Endothelial cell of umbilical vein (primary cell): ENCODE measurements at regions of chr2 and their contacts with region 1.

Region 1: DNA sequence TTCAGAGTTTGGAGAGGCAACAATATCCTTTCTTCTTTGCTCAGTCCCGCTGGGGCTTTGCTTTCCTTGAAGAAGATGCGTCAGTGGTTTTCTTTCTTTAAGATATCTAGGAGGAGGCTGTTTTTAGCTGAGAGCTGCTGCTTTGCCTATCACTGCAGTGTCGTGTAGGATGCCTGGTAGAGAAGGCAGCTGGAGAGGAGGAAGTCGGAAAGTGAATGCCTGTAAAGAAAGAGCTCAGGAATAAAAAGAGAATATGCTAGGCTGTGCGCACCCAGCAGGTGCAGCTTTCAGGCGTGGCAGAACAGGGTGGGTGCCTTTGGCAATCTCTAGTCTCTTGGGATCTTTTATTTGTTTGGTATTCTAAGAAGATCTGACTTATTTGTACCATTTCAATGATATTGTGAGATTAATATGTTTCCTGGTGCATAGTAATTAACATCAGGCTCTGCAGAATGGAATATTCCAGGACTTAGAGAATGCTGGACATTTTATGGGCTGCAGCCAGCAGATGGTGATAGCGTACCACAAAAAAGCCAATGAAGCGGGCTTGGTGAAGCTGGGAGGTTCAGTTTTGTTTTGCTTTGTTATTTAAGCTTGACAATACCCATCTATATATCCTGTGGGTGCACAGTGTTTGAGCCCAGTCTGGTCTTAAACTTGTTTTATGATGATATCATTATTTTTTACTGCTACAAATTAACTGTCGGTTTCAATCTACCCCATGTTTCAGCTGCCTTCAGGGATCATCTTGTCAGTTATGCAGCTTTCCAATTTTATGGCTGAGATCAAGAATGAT is 34.9 kb downstream of the CAVIN2 start:
- DNase-seq: peak; percentile 86
- H3K4me3 ChIP-seq: no peak overlapping the region
- H3K27ac ChIP-seq: no peak overlapping the region
- H3K4me1 ChIP-seq: peaks cover 2% of the 10 kb centered on the region
- H3K27me3 ChIP-seq: no peaks in the 10 kb centered on the region
- CTCF ChIP-seq: peak; percentile 67 to 68
- POLR2A ChIP-seq: no peak

Region 2: DNA sequence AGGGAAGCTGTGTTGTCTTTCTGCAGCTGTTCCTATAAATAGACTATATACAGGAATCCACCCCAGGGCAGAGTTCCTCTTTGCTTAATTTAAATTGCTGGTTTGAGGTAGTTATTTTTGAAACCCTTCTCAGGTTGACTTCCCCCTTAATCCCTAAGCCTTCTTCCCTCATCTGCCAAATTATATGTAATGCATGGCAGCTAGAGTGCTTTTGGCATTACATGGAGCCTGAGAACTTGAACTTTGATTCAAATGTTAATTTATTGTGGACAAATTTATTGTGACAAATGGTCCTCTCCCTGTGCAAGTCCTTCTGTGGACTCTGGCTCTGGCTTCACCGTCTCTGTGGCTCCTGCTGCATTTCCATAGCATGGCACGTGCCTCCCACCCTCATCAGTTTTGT is 537.6 kb before region 1 on chr2:
- CTCF ChIA-PET with region 1: no interaction called
- POLR2A ChIA-PET with region 1: no interaction called
- dilution Hi-C with region 1: no loop called
- intact Hi-C with region 1: no loop called
- DNase-seq: no peak
- H3K4me3 ChIP-seq: no peak overlapping the region
- H3K27ac ChIP-seq: no peak overlapping the region
- H3K4me1 ChIP-seq: no peaks in the 10 kb centered on the region
- H3K27me3 ChIP-seq: no peaks in the 10 kb centered on the region
- CTCF ChIP-seq: no peak
- POLR2A ChIP-seq: no peak

Region 3: DNA sequence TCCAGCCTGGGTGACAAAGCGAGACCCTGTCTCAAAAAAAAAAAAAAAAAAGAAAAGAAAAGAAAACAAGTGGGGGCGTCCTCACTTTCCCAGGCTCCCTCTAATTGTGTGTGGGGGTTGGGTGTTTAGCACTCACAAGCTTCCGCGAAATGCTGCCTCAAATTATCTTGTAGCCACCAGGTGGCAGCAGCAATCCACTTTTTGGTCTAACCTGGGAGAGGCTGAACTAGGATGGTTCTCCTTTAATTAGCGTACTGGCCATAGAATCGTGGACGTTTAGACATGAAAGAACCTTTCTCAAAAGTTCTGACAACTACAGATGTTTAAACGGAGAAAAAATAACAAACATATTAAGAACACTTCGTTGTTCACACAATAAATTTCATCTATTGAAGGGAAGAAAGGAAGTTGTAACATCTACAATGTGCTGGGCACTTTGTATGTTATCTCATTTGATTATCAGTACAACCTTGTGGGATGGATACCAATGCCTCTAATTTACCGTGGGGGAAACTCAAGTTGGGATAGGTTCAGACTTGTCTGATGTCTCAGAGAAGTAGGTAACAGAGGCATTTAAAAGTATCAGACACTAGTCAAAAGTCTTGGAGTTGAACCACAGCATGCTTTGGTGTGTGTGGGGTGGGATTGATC is 256.8 kb before region 1 on chr2:
- CTCF ChIA-PET with region 1: interaction called, 22 read pairs
- POLR2A ChIA-PET with region 1: no interaction called
- dilution Hi-C with region 1: no loop called
- intact Hi-C with region 1: loop called (anchors 1 kb)
- DNase-seq: peak; percentile 80
- H3K4me3 ChIP-seq: no peak overlapping the region
- H3K27ac ChIP-seq: no peak overlapping the region
- H3K4me1 ChIP-seq: peaks cover 8% of the 10 kb centered on the region
- H3K27me3 ChIP-seq: peaks cover 3 to 7% of the 10 kb centered on the region in 2 experiments
- CTCF ChIP-seq: peak; percentile 65 to 69
- POLR2A ChIP-seq: no peak

Region 4: DNA sequence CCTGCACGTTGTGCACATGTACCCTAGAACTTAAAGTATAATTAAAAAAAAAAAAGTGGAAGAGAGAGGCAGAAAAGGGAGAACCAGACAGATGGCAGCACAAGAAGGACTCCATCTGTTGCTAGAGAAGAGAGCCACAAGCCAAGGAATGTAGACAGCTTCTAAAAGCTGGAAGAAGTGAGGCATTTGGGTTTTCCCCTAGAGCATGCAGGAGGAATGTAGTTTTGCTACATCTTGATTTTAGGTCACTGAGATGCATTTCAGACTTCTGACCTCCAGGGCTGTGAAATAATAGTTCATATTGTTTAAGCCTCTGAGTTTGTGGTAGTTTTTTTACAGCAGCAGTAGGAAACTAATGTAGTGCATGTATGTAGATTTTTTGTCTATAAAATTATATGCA is 11.1 kb before region 1 on chr2:
- CTCF ChIA-PET with region 1: interaction called, 11 read pairs
- POLR2A ChIA-PET with region 1: no interaction called
- dilution Hi-C with region 1: no loop called
- intact Hi-C with region 1: no loop called
- DNase-seq: no peak
- H3K4me3 ChIP-seq: no peak overlapping the region
- H3K27ac ChIP-seq: no peak overlapping the region
- H3K4me1 ChIP-seq: no peaks in the 10 kb centered on the region
- H3K27me3 ChIP-seq: no peaks in the 10 kb centered on the region
- CTCF ChIP-seq: no peak
- POLR2A ChIP-seq: no peak

Region 5: DNA sequence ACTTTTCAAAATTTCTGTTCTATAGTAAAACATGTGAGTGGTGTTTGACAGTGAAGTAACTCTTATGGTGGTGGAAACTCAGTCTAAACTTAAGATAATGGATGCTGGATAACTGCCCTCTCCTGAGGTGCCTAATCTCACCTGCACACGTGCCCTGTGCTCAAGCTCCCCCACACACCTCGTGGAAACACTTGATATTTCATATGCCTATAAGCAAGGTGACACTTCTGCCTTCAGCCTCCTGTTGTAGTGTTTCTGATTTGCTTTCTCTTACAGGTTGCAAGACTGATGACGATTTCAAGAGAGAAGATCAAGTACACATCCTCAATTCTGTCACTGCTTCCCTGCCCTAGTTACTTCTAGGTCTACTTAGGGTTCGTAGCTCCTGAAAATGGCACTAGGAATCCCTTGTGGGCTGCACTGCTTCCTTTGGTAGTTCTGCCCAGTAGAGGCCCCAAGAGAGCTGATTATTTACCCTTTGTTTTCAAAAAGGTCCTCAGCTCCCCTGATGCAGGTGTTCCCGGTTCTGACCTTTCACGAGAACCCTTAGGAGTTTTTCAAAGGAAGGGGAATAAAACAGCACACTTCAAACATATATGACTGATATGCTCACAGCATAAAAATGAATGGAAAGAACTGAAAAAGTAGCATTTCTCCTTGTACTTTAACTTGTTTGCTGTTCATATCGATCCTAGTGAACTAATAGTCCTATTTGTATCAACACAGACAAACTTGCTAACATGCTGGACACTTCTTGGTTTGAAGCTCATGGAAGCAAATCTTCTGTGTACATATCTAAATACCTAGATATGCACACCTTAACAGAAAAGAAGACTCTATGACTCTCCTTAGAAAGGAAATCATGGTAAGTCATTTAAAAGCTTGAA is 28.2 kb after region 1 on chr2:
- CTCF ChIA-PET with region 1: interaction called, 11 read pairs
- POLR2A ChIA-PET with region 1: no interaction called
- dilution Hi-C with region 1: no loop called
- intact Hi-C with region 1: no loop called
- DNase-seq: peak; percentile 48
- H3K4me3 ChIP-seq: peak overlapping the region in 2 of 3 experiments; percentile 95 to 99
- H3K27ac ChIP-seq: no peak overlapping the region
- H3K4me1 ChIP-seq: peaks cover 63% of the 10 kb centered on the region
- H3K27me3 ChIP-seq: no peaks in the 10 kb centered on the region
- CTCF ChIP-seq: peak; percentile 10 to 16
- POLR2A ChIP-seq: no peak

Region 6: GRCh38 chr2:191869178-191869577 is 57.2 kb after region 1 on chr2:
- CTCF ChIA-PET with region 1: interaction called, 44 read pairs
- POLR2A ChIA-PET with region 1: no interaction called
- dilution Hi-C with region 1: no loop called
- intact Hi-C with region 1: loop called (anchors 1 kb)
- DNase-seq: peak; percentile 65
- H3K4me3 ChIP-seq: no peak overlapping the region
- H3K27ac ChIP-seq: no peak overlapping the region
- H3K4me1 ChIP-seq: peaks cover 39% of the 10 kb centered on the region
- H3K27me3 ChIP-seq: no peaks in the 10 kb centered on the region
- CTCF ChIP-seq: peak; percentile 25 to 37
- POLR2A ChIP-seq: no peak

Region 7: DNA sequence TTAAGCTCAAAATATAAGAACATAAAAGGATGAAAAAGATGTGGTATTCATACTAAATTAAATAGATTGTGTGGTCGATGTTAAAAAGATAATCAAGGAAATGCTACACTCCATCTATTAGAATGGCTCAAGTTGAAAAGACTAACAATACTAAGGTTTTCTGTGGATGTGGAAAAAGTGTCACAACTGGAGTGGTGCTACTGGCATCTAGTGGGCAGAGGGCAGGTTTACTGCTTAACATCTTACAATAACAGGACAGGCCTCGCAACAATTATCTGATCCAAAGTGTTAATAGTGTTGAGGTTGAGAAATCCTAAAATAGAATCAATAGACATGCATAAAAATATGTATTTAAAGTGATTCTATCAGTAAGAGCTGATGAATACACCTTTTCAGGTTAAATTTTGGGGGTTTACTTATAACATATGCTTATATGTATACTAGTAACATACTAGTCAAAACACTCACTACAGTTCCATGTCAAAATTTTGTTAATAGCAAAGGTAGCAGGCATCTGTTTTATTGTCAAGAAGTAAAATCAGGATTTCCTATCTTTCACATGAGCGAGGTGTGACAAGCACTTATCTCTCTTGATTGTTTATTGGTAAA is 474.2 kb after region 1 on chr2:
- CTCF ChIA-PET with region 1: interaction called, 49 read pairs
- POLR2A ChIA-PET with region 1: no interaction called
- dilution Hi-C with region 1: no loop called
- intact Hi-C with region 1: loop called (anchors 1 kb)
- DNase-seq: peak; percentile 73
- H3K4me3 ChIP-seq: no peak overlapping the region
- H3K27ac ChIP-seq: no peak overlapping the region
- H3K4me1 ChIP-seq: no peaks in the 10 kb centered on the region
- H3K27me3 ChIP-seq: peaks cover 1 to 4% of the 10 kb centered on the region in 2 experiments
- CTCF ChIP-seq: peak; percentile 45 to 55
- POLR2A ChIP-seq: no peak